OCI-LY7 (cell line): ENCODE measurements at regions of chr20 and their contacts with region 1.

Region 1: GRCh38 chr20:5642155-5642981 is 107.8 kb upstream of the SHLD1 start:
- DNase-seq: no peak
- H3K4me3 ChIP-seq: no peak overlapping the region
- H3K27ac ChIP-seq: peak overlapping the region; percentile 65
- H3K4me1 ChIP-seq: peaks cover 57% of the 10 kb centered on the region
- CTCF ChIP-seq: no peak

Region 2: DNA sequence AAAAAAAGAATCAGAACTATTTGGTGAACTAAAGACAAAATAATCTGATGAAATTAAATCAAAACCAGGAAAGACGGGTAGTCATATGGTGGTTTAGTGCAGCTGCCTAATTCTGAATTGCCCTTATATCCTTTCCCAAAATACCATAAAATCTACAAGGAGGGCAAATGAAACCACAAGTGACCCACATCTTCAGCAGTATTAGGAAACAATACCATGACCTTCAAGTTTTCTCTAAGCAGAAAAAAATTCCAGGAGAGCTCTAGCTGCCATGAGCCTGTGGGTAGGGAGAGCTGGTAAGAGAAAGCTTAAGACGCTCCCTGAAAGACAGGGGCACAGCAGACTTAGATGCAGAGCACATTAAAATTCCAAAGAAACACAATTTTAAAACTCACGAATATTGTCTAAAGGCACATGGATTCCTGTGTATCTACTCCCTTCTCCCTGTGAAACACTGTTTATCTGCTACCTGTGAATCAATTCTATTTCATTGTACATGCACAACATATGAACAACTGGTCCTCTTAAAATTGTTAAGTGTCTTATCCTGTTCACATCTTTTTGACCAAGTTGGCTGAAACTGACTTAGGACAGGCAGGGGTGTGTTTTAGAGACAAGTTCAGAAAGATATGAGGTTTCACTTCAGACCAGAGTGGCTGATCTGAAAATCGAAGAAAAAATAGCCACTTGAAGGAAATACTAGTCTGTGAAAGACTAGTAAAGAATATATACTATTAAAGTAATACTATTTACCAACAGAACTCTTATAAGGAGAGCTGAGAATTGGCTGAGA is 45.8 kb before region 1 on chr20:
- CTCF ChIA-PET with region 1: interaction called, 3 read pairs
- POLR2A ChIA-PET with region 1: interaction called, 76 read pairs
- intact Hi-C with region 1: loop called (anchors 5 kb)
- DNase-seq: no peak
- H3K4me3 ChIP-seq: peak overlapping the region; percentile 3
- H3K27ac ChIP-seq: peak overlapping the region; percentile 97
- H3K4me1 ChIP-seq: peaks cover 100% of the 10 kb centered on the region
- CTCF ChIP-seq: no peak

Region 3: GRCh38 chr20:5674176-5674660 is 31.9 kb after region 1 on chr20:
- CTCF ChIA-PET with region 1: interaction called, 3 read pairs
- POLR2A ChIA-PET with region 1: interaction called, 58 read pairs
- intact Hi-C with region 1: loop called (anchors 1 kb)
- DNase-seq: peak; percentile 94
- H3K4me3 ChIP-seq: peak overlapping the region; percentile 61
- H3K27ac ChIP-seq: peak overlapping the region; percentile 94
- H3K4me1 ChIP-seq: peaks cover 99% of the 10 kb centered on the region
- CTCF ChIP-seq: 0 out of 2 replicates have a peak, but pooled peaks have one; percentile 30

Region 4: GRCh38 chr20:5691918-5692618 is 49.7 kb after region 1 on chr20:
- CTCF ChIA-PET with region 1: no interaction called
- POLR2A ChIA-PET with region 1: interaction called, 15 read pairs
- intact Hi-C with region 1: loop called (anchors 1 kb)
- DNase-seq: peak; percentile 99
- H3K4me3 ChIP-seq: peak overlapping the region; percentile 48
- H3K27ac ChIP-seq: peak overlapping the region; percentile 93
- H3K4me1 ChIP-seq: peaks cover 75% of the 10 kb centered on the region
- CTCF ChIP-seq: no peak

Region 5: DNA sequence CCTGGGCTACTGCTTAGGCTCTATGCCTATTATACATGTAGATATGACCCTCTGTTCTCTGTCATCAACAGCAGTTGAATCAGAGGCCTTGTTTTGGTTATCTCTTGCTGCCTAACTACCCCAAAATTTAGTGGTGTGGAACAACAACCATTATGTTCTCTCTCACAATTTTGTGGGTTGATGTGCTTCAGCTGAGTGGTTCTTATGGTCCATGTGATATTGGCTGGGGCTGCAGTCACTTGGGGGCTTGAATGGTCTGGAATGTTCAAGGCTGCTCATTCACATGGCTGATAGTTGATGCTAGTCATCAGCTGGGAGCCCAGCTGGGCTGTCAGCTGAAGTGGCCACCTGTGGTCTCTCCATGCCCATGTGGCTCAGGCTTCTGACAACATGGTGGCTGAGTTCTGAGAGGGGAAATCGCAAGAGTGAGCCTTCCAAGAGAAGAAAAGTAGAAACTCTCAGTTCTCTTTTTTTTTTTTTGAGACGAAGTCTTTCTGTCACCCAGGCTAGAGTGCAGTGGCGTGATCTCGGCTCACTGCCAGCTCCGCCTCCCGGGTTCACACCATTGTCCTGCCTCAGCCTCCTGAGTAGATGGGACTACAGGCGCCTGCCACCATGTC is 155.6 kb after region 1 on chr20:
- CTCF ChIA-PET with region 1: no interaction called
- POLR2A ChIA-PET with region 1: interaction called, 10 read pairs
- intact Hi-C with region 1: loop called (anchors 2 kb)
- DNase-seq: peak; percentile 98
- H3K4me3 ChIP-seq: peak overlapping the region; percentile 14
- H3K27ac ChIP-seq: peak overlapping the region; percentile 97
- H3K4me1 ChIP-seq: peaks cover 95% of the 10 kb centered on the region
- CTCF ChIP-seq: no peak